ENCODE measurements at regions of chr11 and their contacts with region 1.

Region 1: DNA sequence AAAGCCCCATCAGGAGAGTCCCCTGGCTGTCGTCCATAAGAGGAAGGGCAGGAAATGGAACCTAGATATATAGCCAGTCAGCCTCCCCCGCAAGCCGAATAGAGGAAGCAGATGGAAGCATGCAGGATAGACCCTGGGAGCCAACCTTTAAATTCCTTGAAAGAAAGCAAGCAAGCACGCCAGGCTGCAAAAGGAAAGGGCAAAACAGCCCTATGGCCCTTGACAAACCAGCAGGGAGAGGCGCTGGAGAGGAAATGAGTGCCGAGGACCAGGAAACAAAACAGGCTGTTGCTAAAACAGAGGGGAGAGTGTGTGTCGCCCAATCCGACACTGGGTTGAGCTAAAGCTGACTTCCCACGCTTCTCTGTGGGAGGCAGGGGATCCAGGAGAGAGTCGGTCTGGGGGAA is 203.5 kb upstream of the MTNR1B start:
- DNase-seq: peak in 1 of 2 donors; percentile 46
- ATAC-seq: peak; percentile 52
- H3K4me3 ChIP-seq: peak overlapping the region in 1 of 2 donors; percentile 67
- H3K27ac ChIP-seq: peak overlapping the region in 1 of 2 donors; percentile 52
- H3K4me1 ChIP-seq: peaks cover 0 to 2% of the 10 kb centered on the region in 2 donors
- H3K27me3 ChIP-seq: no peaks in the 10 kb centered on the region

Region 2: GRCh38 chr11:92870196-92870832 is 104.3 kb after region 1 on chr11:
- intact Hi-C with region 1: loop called in 1 of 2 experiments (anchors 10 kb)
- DNase-seq: no peak
- ATAC-seq: no peak
- H3K4me3 ChIP-seq: no peak overlapping the region
- H3K27ac ChIP-seq: no peak overlapping the region
- H3K4me1 ChIP-seq: no peaks in the 10 kb centered on the region
- H3K27me3 ChIP-seq: no peaks in the 10 kb centered on the region